Caco-2 (cell line): ENCODE measurements at regions of chr17 and their contacts with region 1.

Region 1: GRCh38 chr17:14276535-14277250 is 24.2 kb upstream of the HS3ST3B1 start:
- DNase-seq: no peak
- H3K4me3 ChIP-seq: no peak overlapping the region
- H3K4me3 Mint-ChIP-seq: no peak overlapping the region
- H3K27ac Mint-ChIP-seq: no peak overlapping the region
- H3K4me1 ChIP-seq: no peaks in the 10 kb centered on the region
- H3K4me1 Mint-ChIP-seq: no peaks in the 10 kb centered on the region
- H3K27me3 ChIP-seq: no peaks in the 10 kb centered on the region
- H3K27me3 Mint-ChIP-seq: no peaks in the 10 kb centered on the region
- CTCF ChIP-seq: no peak

Region 2: DNA sequence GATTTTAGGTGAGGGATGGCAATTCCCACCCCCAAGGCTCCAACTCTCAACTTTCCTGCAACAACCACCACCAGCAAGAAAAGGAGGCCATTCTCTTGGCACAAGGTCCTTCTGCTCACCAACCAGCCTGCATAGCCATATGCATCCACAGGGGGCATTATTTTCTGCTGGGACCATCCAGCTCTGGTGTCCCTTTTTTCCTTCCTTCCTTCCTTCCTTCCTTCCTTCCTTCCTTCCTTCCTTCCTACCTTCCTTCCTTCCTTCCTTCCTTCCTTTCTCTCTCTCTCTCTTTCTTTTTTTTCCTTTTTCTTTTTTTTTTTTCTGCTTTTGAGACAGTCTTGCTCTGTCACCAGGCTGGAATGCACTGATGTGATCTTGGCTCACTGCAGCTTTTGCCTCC is 228.5 kb before region 1 on chr17:
- CTCF ChIA-PET with region 1: interaction called, 11 read pairs
- POLR2A ChIA-PET with region 1: no interaction called
- intact Hi-C with region 1: no loop called
- DNase-seq: peak in 1 of 2 experiments; percentile 2
- H3K4me3 ChIP-seq: no peak overlapping the region
- H3K4me3 Mint-ChIP-seq: no peak overlapping the region
- H3K27ac Mint-ChIP-seq: no peak overlapping the region
- H3K4me1 ChIP-seq: no peaks in the 10 kb centered on the region
- H3K4me1 Mint-ChIP-seq: no peaks in the 10 kb centered on the region
- H3K27me3 ChIP-seq: no peaks in the 10 kb centered on the region
- H3K27me3 Mint-ChIP-seq: no peaks in the 10 kb centered on the region
- CTCF ChIP-seq: no peak

Region 3: GRCh38 chr17:14098224-14098623 is 178.5 kb before region 1 on chr17:
- CTCF ChIA-PET with region 1: no interaction called
- POLR2A ChIA-PET with region 1: no interaction called
- intact Hi-C with region 1: no loop called
- DNase-seq: peak; percentile 27 to 39
- H3K4me3 ChIP-seq: no peak overlapping the region
- H3K4me3 Mint-ChIP-seq: no peak overlapping the region
- H3K27ac Mint-ChIP-seq: no peak overlapping the region
- H3K4me1 ChIP-seq: peaks cover 16% of the 10 kb centered on the region
- H3K4me1 Mint-ChIP-seq: peaks cover 6% of the 10 kb centered on the region
- H3K27me3 ChIP-seq: no peaks in the 10 kb centered on the region
- H3K27me3 Mint-ChIP-seq: no peaks in the 10 kb centered on the region
- CTCF ChIP-seq: no peak

Region 4: DNA sequence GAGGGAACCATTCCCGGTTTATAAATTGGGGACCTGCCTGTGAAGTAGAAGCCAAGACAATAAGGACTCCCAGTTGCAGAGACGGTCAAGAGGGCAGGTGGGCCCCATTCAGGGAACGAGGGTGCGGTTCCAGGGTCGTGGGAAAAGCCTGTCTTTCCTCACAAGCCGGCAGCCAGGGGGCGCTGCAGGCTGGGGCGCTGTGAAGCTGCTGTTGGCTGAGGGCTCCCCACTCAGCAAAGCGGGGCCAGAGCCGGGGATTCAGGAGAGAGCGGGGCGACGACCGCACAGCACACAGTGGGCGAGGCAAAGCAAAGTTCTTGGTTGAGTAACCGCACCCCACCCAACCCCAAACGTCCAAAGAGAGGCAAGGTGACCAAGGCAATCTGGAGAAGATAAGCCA is 64.9 kb before region 1 on chr17:
- CTCF ChIA-PET with region 1: no interaction called
- POLR2A ChIA-PET with region 1: no interaction called
- intact Hi-C with region 1: no loop called
- DNase-seq: no peak
- H3K4me3 ChIP-seq: no peak overlapping the region
- H3K4me3 Mint-ChIP-seq: no peak overlapping the region
- H3K27ac Mint-ChIP-seq: no peak overlapping the region
- H3K4me1 ChIP-seq: no peaks in the 10 kb centered on the region; the same call in 1 of the 2 replicates
- H3K4me1 Mint-ChIP-seq: no peaks in the 10 kb centered on the region
- H3K27me3 ChIP-seq: no peaks in the 10 kb centered on the region
- H3K27me3 Mint-ChIP-seq: no peaks in the 10 kb centered on the region
- CTCF ChIP-seq: no peak

Region 5: DNA sequence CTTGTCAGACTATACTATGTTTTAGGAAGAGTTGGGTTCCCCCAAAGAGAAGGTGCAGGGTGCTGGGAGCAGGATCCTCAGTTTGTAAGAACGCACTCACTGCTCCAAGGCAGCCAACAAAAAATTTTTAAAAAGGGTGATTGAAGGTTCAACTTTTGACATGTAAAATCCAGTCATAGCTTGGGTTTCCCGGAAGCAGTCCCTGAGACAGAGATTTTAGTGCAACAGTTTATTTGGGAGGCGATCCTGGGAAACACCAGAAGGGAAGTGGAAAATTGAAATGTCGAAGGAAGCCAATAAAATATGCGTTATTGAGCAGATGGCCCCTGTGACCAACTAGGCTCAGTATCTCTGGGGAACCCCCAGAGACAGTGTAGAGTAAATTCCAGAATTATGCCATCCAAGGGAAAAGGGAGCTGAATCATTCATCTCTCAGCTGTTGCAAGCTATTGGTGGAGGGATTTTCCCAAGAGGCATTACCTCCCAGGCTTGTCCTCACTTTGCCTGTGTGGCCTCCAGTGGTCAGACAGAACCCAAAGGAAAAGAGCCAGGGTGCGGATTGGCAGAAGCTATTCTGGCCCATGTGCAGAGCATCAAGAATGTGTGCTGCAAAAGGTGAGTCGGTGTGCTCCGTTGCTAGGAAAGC is 97.0 kb after region 1 on chr17:
- CTCF ChIA-PET with region 1: no interaction called
- POLR2A ChIA-PET with region 1: no interaction called
- intact Hi-C with region 1: no loop called
- DNase-seq: no peak
- H3K4me3 ChIP-seq: no peak overlapping the region
- H3K4me3 Mint-ChIP-seq: no peak overlapping the region
- H3K27ac Mint-ChIP-seq: peak overlapping the region; percentile 50
- H3K4me1 ChIP-seq: 0 out of 2 replicates have a peak, but pooled peaks cover 8% of the 10 kb centered on the region
- H3K4me1 Mint-ChIP-seq: peaks cover 15% of the 10 kb centered on the region
- H3K27me3 ChIP-seq: no peaks in the 10 kb centered on the region
- H3K27me3 Mint-ChIP-seq: no peaks in the 10 kb centered on the region
- CTCF ChIP-seq: no peak